Posterior cingulate gyrus (tissue), 11 donors: ENCODE measurements at regions of chr3 and their contacts with region 1.

Region 1: DNA sequence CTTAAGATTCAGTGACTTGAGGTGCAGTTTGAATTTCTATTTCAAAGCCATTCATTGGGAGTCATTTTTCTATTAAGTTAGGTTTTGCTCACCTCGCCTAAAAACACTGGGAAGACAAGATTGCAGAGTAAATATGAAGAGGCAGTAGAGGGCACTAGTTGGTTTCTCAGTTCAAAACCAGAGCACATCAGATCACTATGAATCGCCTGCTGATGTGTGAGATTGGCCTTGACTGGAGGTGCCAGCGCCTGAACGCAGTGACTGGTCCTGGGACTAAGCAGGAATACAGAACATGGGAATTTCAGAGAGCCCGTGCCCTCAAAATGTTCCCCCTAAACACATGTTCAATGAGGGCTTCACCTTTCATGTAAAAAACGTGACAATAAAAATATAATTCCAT is 229.0 kb downstream of the ITPR1 start:
- DNase-seq: peak in 1 of 10 donors; percentile 36

Region 2: DNA sequence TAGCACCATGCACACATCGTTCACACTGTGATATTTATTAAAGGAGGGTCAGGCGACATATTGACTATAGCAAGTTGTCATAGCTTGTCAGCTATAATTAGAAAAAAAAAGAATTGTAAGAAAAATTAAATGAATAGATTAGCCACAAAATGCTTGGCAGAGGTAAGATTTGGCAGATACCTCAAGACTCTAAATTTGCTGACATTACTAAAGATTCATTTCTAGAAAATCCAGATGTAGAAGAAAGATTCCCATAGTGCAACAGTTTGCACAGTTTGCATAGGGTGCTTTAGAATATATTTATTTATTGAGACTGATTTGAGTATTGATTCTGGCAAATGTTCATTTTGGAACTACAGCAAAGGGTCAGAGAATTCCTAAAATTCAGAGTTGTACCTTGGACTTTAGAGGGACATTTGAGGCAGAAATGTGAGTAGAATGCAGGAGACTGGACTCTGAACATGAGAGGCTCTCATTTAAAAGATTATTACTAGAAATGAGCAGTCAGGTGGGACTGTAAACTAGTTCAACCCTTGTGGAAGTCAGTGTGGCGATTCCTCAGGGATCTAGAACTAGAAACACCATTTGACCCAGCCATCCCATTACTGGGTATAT is 155.2 kb after region 1 on chr3:
- intact Hi-C with region 1: loop called (anchors 10 kb)
- DNase-seq: no peak

Region 3: GRCh38 chr3:4978204-4978965 is 256.3 kb after region 1 on chr3:
- intact Hi-C with region 1: loop called (anchors 5 kb)
- DNase-seq: peak; percentile 68 to 98 (median 89)